ENCODE measurements at regions of chr19 and their contacts with region 1.

Region 1: GRCh38 chr19:18192673-18193387 is at the start of gene MPV17L2:
- DNase-seq: peak; percentile 93
- H3K4me3 ChIP-seq: peak within 1 kb of the TSS; percentile 72 to 94
- H3K27ac ChIP-seq: peak within 1 kb of the TSS; percentile 82 to 84
- H3K4me1 ChIP-seq: peaks cover 9 to 26% of the 10 kb centered on the region in 2 experiments; a peak in 2 of 4 replicates
- H3K27me3 ChIP-seq: no peaks in the 10 kb centered on the region
- CTCF ChIP-seq: no peak
- EP300 ChIP-seq: peak in 1 of 2 experiments; percentile 48; a peak in 1 of 4 replicates
- RAD21 ChIP-seq: no peak
- polyA plus RNA-seq, gene MPV17L2: 17.5 and 20.6 TPM in 2 replicates

Region 2: DNA sequence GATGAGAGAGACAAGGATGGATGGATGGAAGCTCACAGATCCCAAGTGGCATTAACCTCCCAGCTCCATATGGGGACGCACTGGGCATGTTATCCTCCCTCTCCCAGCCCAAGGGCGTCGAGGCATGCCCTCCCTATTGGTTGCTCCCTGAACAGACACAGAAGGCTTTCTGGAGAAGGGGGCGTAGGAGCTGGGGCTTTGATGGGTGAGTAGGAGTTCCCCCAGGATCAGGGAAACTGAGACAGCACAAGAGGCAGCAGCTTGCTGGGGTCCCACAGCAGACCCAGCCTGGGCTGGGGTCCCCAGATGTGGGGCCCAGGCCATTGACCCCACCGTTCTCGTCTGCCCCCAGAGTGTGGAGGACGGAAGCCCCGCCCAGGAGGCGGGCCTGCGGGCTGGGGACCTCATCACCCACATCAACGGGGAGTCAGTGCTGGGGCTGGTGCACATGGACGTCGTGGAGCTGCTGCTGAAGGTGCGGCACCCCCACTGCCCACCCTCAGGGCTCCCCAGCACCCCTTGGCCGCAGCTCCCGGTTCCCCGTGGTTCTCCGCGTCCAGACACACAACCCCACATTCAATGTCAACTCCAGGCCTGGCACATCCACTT is 47.3 kb before region 1 on chr19:
- CTCF ChIA-PET with region 1: no interaction called
- POLR2A ChIA-PET with region 1: no interaction called
- DNase-seq: no peak
- H3K4me3 ChIP-seq: no peak overlapping the region
- H3K27ac ChIP-seq: no peak overlapping the region
- H3K4me1 ChIP-seq: no peaks in the 10 kb centered on the region
- H3K27me3 ChIP-seq: no peaks in the 10 kb centered on the region
- CTCF ChIP-seq: no peak
- EP300 ChIP-seq: no peak
- RAD21 ChIP-seq: no peak

Region 3: DNA sequence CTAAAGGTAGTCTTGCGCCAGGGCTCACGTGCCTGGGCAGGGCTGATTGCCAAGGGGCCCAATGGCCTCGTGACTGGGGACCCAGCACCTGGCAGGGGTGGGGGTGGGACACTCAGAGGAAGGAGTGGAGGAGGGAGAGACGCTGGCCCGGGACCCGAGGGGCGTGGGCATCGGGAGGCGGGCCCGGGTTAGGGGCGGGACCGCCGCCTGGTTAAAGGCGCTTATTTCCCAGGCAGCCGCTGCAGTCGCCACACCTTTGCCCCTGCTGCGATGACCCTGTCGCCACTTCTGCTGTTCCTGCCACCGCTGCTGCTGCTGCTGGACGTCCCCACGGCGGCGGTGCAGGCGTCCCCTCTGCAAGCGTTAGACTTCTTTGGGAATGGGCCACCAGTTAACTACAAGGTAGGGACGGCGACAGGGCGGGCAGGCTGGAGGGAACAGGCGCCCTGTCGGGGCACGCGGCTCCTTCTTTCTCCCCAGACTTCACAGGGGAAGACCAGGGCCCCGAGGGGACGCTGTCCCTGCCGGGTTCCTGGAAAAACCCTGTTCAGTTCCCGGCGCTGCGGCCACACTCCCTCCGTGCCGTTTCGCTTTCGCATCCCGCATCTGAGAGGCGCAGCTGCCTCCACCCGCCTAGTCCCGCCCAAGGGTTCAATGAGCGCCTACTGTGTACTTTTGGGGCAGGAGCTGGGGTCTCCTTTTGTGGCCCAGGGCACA is 19.1 kb before region 1 on chr19 and contains the start of gene IFI30:
- CTCF ChIA-PET with region 1: interaction called, 11 read pairs
- POLR2A ChIA-PET with region 1: no interaction called
- DNase-seq: peak; percentile 88
- H3K4me3 ChIP-seq: peak within 1 kb of the TSS; percentile 63 to 78
- H3K27ac ChIP-seq: no peak within 1 kb of the TSS; a peak in 1 of 4 replicates
- H3K4me1 ChIP-seq: peaks cover 0 to 8% of the 10 kb centered on the region in 2 experiments; a peak in 1 of 4 replicates
- H3K27me3 ChIP-seq: no peaks in the 10 kb centered on the region
- CTCF ChIP-seq: no peak
- EP300 ChIP-seq: no peak
- RAD21 ChIP-seq: no peak
- polyA plus RNA-seq, gene IFI30: 10.7 and 11.6 TPM in 2 replicates

Region 4: GRCh38 chr19:18233224-18233825 is 40.5 kb after region 1 on chr19:
- CTCF ChIA-PET with region 1: interaction called, 16 read pairs
- POLR2A ChIA-PET with region 1: interaction called, 3 read pairs
- DNase-seq: peak; percentile 83
- H3K4me3 ChIP-seq: peak overlapping the region; percentile 35 to 42; a peak in 3 of 4 replicates
- H3K27ac ChIP-seq: no peak overlapping the region; a peak in 1 of 4 replicates
- H3K4me1 ChIP-seq: peaks cover 0 to 11% of the 10 kb centered on the region in 2 experiments; a peak in 1 of 4 replicates
- H3K27me3 ChIP-seq: no peaks in the 10 kb centered on the region
- CTCF ChIP-seq: no peak
- EP300 ChIP-seq: no peak
- RAD21 ChIP-seq: no peak

Measured in SK-N-SH (cell line).